ENCODE measurements at regions of chr16 and their contacts with region 1.

Region 1: GRCh38 chr16:68590201-68590994 is 51.3 kb downstream of the ZFP90 start:
- DNase-seq: peak; percentile 83
- H3K4me3 Mint-ChIP-seq: peak overlapping the region; percentile 17
- H3K27ac Mint-ChIP-seq: peak overlapping the region; percentile 52
- H3K4me1 Mint-ChIP-seq: peaks cover 4% of the 10 kb centered on the region
- H3K27me3 Mint-ChIP-seq: no peaks in the 10 kb centered on the region

Region 2: GRCh38 chr16:68436581-68436980 is 153.8 kb before region 1 on chr16:
- CTCF ChIA-PET with region 1: no interaction called
- intact Hi-C with region 1: no loop called
- DNase-seq: no peak
- H3K4me3 Mint-ChIP-seq: no peak overlapping the region
- H3K27ac Mint-ChIP-seq: no peak overlapping the region
- H3K4me1 Mint-ChIP-seq: peaks cover 18% of the 10 kb centered on the region
- H3K27me3 Mint-ChIP-seq: no peaks in the 10 kb centered on the region

Region 3: DNA sequence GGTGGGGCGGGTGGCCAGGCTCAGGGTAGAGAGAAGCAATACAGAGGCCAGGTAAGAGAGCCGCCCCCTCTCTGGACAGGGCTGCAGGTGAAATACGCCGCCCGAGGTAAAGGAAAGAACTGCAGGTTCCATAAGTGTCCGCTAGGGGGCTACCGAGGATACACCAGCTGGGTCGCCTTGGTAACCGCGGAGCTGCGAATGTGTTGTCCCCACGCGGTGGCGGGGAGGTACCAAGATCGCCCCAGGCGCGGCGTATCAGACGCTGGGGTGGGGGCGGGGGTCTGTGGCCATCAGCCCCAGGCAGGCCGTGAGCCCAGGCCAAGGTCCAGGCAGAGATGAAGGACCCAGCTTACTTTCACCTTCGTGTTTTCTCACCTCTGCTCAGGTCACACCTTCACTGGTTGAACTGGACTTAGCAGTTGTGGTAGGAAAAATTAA is 69.7 kb before region 1 on chr16:
- CTCF ChIA-PET with region 1: interaction called, 11 read pairs
- intact Hi-C with region 1: no loop called
- DNase-seq: peak; percentile 94
- H3K4me3 Mint-ChIP-seq: peak overlapping the region; percentile 41
- H3K27ac Mint-ChIP-seq: no peak overlapping the region
- H3K4me1 Mint-ChIP-seq: peaks cover 6% of the 10 kb centered on the region
- H3K27me3 Mint-ChIP-seq: no peaks in the 10 kb centered on the region

Region 4: DNA sequence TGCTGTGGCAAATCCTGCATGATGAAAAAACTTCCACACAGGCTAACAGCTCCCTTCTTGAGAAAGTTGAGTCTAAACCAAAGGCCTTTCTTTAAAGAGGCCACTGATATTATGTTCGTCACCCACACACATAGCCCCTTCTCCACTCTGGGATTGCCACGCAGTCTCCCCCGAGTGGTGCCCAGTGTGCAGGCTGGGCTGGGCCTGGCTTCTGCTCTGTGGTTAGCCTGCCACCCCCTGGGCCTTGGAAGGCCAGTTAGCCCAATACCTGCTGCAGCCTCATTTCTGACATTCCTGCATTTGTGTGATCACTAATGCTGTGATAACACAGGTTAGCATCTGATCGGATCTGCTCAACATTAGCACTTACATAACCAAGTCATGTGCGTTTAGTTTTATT is 99.5 kb after region 1 on chr16:
- CTCF ChIA-PET with region 1: interaction called, 7 read pairs
- intact Hi-C with region 1: loop called (anchors 2 kb)
- DNase-seq: peak; percentile 20
- H3K4me3 Mint-ChIP-seq: no peak overlapping the region
- H3K27ac Mint-ChIP-seq: no peak overlapping the region
- H3K4me1 Mint-ChIP-seq: no peaks in the 10 kb centered on the region
- H3K27me3 Mint-ChIP-seq: no peaks in the 10 kb centered on the region

Region 5: DNA sequence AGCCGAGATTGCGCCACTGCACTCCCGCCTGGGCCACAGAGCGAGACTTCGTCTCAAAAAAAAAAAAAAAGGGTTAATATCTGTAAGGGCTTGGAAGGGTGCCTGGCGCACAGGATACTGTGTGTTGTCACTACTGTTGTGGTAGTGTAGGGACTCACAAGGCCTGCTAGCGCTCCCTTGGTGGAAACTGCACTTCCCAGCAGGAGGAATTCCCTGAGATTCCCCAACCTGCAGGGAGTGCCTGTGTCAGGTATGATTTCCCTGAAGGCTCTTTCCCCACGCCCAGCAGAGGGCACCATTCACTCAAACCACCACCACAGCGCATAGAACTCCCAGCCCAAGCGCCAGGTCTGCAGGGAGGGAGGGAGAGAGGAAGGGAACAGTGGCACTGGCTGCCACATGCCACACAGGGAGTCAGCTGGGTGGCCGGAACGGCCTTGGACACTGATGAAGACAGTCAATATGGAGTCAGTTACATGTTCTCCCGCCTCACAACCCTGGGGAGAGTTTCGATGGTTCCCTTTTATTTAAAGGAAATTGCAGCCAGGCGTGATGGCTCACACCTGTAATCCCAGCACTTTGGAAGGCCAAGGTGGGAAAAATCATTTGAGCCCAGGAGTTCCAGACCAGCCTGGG is 114.0 kb after region 1 on chr16:
- CTCF ChIA-PET with region 1: interaction called, 12 read pairs
- intact Hi-C with region 1: loop called (anchors 2 kb)
- DNase-seq: peak; percentile 85
- H3K4me3 Mint-ChIP-seq: no peak overlapping the region
- H3K27ac Mint-ChIP-seq: no peak overlapping the region
- H3K4me1 Mint-ChIP-seq: peaks cover 3% of the 10 kb centered on the region
- H3K27me3 Mint-ChIP-seq: no peaks in the 10 kb centered on the region

Region 6: GRCh38 chr16:68800257-68800875 is 210.0 kb after region 1 on chr16:
- CTCF ChIA-PET with region 1: interaction called, 22 read pairs
- intact Hi-C with region 1: loop called (anchors 2 kb)
- DNase-seq: peak; percentile 86
- H3K4me3 Mint-ChIP-seq: no peak overlapping the region
- H3K27ac Mint-ChIP-seq: peak overlapping the region; percentile 30
- H3K4me1 Mint-ChIP-seq: peaks cover 3% of the 10 kb centered on the region
- H3K27me3 Mint-ChIP-seq: no peaks in the 10 kb centered on the region

Region 7: DNA sequence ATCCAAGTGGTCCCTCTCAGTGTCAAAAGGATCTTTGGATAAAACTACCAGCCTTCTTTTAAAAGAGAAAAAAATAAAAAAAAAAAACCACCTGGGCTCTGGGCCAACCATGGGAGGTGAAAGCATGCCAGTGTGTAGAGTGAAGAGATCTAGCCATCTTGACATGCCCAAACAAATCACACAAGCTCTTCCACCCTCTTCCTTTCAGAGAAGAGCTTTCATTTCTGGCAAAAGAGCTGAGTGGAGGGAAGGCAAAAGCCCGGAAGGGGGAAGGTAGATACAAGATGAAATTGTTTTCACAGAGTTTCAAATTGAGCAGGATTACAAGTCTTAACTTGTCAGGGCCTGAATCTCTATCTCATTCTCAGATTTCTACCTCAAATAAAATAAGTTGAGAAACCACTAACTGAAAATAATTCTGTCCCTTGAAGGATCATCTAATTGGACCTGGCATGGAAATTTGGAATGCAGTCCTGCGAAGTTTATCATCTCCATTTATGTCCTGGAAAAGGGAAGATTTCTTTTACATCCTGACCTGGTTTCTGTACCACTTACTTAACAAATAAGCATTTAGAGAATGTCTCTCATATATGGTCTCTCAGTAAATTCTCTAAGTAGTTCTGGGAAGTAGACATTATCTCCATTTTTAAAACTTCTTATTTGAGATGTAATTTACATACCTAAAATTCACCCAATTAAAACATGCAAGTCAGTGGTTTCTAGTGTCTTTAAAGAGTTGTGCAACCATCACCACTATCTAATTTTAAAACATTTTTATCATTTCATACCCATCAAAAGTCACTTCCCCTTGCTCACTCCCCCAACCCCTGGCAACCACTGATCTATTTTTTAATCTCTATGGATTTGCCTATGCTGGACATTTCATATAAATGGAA is 346.6 kb after region 1 on chr16:
- CTCF ChIA-PET with region 1: no interaction called
- intact Hi-C with region 1: no loop called
- DNase-seq: no peak
- H3K4me3 Mint-ChIP-seq: no peak overlapping the region
- H3K27ac Mint-ChIP-seq: peak overlapping the region; percentile 44
- H3K4me1 Mint-ChIP-seq: no peaks in the 10 kb centered on the region
- H3K27me3 Mint-ChIP-seq: no peaks in the 10 kb centered on the region

Region 8: GRCh38 chr16:69105489-69106361 is 515.3 kb after region 1 on chr16 and contains the start of gene HAS3:
- CTCF ChIA-PET with region 1: interaction called, 3 read pairs
- intact Hi-C with region 1: loop called (anchors 5 kb)
- DNase-seq: peak; percentile 60
- H3K4me3 Mint-ChIP-seq: peak within 1 kb of the TSS; percentile 79
- H3K27ac Mint-ChIP-seq: peak within 1 kb of the TSS; percentile 26
- H3K4me1 Mint-ChIP-seq: peaks cover 21% of the 10 kb centered on the region
- H3K27me3 Mint-ChIP-seq: peaks cover 26% of the 10 kb centered on the region
- total RNA-seq, gene HAS3: 0.20 to 0.31 TPM

Region 9: DNA sequence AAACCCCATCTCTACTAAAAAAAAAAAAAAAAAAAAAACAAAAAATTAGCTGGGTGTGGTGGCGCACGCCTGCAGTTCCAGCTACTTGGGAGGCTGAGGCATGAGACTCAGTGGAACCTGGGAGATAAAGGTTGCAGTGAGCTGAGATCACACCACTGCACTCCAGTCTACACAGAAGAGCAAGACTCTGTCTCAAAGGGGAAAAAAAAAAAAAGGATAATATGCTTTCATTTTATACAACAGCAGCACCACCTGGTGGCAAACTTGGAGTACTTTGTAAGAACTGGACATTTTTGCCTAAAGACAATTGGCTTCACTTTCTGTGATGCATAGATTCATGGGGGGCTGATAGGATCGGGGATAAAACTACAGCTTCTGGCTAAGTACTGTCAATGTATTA is 533.5 kb after region 1 on chr16:
- CTCF ChIA-PET with region 1: interaction called, 16 read pairs
- intact Hi-C with region 1: no loop called
- DNase-seq: peak; percentile 74
- H3K4me3 Mint-ChIP-seq: no peak overlapping the region
- H3K27ac Mint-ChIP-seq: no peak overlapping the region
- H3K4me1 Mint-ChIP-seq: peaks cover 18% of the 10 kb centered on the region
- H3K27me3 Mint-ChIP-seq: no peaks in the 10 kb centered on the region

Region 10: DNA sequence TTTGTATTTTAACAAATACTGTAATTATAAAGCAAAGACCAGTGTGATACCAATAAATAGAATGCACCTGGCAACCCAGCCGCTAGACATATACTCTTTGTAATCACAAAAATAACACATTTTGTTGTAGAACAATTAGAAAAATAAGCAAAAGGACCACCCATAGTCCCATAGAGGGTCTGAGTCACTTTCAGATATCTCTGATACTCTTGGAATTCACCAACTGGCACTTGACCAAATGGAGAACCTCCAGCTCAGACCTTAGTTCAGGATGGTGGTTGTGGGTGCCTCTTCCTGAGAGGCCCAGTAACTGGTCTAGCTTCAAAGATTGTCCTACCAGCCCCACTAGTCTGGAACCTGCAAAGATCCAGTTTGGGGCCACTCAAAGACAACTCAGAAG is 796.2 kb after region 1 on chr16:
- CTCF ChIA-PET with region 1: no interaction called
- intact Hi-C with region 1: no loop called
- DNase-seq: no peak
- H3K4me3 Mint-ChIP-seq: peak overlapping the region; percentile 97
- H3K27ac Mint-ChIP-seq: peak overlapping the region; percentile 92
- H3K4me1 Mint-ChIP-seq: peaks cover 29% of the 10 kb centered on the region
- H3K27me3 Mint-ChIP-seq: no peaks in the 10 kb centered on the region

Measured in activated naive CD4-positive, alpha-beta T cell treated with anti-CD3 and anti-CD28 coated beads for 36 hours (primary cell).